ENCODE measurements at regions of chr1 and their contacts with region 1.

Region 1: DNA sequence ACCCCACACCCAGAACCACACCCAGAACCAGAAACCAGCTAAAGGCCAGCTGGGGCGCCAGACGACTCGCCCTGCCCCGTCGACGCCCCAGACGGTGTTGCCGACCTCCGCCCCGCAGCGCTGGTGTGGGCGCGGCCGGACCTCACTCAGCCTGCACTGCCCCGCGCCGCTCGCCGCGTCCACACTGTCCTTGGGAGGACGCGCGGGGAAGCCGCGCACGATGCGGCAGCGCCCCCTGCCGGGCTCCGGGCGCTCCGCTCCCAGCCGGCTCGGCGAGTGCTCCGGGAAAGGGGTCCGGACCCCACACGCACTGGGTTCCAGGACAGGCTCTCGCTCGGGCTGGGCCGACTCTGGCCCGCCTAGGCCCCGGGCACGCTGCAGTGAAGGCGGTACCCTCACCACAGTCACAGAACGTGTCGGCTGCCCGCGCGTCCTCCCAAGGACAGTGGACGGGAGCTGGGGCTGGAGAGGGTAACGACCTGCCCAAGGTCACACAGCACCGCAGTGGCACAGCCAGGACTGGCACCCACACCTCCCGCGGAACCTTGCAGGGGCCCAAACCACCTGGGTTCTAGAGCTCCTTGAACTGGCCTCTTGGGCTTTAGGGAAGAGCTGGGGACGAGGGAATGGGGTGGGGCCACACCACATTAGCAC is 90.2 kb downstream of the DMRTA2 start:
- DNase-seq: peak; percentile 75
- ATAC-seq: peak; percentile 85
- H3K4me3 Mint-ChIP-seq: peak overlapping the region; percentile 34
- H3K27ac Mint-ChIP-seq: no peak overlapping the region
- H3K4me1 Mint-ChIP-seq: peaks cover 3% of the 10 kb centered on the region
- H3K27me3 Mint-ChIP-seq: peaks cover 36% of the 10 kb centered on the region

Region 2: DNA sequence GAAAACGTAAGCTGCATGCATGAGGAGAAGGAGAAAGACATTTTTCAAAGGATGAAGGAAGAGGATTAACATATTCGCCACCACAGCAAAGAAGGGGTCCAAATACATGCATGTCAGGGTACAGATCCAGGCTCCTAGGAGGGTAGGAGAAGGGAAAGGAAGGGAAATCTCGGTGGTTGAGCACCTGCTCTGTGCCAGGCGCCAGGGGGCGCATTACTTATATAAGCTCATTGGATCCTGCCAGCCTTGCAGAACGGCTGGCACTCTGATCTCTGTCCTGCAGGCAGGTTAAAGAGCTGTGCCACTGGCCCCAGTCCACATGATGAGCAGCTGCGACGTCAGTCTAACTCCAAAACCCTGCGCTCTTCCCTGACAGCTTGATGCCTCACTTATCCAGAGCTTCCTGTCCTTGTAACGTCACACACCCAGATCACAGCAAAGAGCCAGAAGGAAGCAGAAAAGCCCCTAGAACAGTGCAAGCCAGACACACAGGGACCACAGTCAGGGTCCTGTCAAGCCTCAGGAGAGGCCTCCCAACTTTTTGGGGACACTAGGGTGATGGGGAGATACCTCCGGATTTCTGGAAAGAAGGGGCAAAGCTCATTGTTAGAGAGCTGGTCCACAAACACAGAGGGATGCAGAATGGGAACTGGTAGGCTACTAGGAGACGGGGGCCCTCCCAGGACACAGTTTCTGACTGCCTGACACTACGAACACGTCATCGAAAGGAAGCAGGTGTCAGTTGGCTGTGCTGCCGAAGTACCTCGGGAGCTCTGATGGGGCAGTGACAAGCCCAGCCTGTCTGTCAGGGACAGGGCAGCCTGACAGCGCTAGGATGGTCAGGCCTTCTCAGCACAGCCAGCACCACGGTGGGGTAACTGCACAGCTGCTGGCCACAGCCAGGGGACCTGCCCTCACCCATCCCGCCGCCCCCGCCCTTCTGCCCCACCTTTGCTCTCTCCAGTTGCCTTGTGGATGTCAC is 1655.5 kb before region 1 on chr1:
- CTCF ChIA-PET with region 1: interaction called, 5 read pairs
- POLR2A ChIA-PET with region 1: no interaction called
- intact Hi-C with region 1: loop called in 1 of 2 experiments (anchors 5 kb)
- DNase-seq: peak; percentile 71
- ATAC-seq: peak; percentile 77
- H3K4me3 Mint-ChIP-seq: no peak overlapping the region
- H3K27ac Mint-ChIP-seq: no peak overlapping the region
- H3K4me1 Mint-ChIP-seq: no peaks in the 10 kb centered on the region
- H3K27me3 Mint-ChIP-seq: peaks cover 20% of the 10 kb centered on the region

Region 3: DNA sequence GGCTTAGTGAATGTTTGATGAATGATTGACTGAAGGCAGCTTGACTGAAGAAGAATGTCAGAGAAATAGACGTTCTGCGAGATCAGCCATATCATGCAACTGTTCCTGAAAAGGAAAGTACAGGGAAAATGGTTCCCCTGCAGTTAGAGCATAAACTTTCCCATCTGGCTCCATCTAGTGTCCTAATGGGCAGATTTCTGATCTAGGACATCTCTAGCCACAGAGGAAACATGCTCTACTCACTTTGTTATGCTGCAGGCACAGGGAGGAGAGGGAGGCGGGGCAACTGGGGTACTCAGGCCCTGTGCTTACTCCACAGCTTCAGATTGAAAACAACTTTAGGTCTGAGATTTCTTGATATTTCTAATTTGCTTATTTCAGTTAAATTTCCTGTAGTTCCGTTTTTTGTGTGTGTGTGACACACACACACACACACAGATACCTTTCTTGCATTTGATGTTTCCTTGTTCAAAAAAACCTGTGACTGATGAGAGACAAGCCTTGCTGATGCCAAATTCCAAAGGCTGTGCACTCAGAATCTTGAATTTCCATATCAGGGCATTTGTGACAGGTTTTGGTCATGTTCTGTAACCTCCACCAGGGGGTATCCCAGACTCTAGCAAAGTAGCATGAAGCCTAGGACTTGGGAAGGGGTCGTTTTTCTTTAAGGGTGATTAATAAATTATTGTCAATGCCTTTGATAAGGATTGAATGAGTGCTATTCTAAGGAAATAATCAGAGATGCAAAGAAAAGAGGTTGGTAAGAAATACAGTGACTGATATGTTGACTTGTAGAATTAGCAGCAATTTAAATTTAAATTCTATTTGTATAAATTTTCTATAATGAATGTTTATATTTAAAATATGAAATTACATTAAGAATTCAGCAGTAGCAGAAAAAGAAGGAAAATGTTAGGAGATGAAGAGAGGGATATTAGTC is 1416.7 kb before region 1 on chr1:
- CTCF ChIA-PET with region 1: no interaction called
- POLR2A ChIA-PET with region 1: no interaction called
- intact Hi-C with region 1: loop called in 1 of 2 experiments (anchors 1 kb)
- DNase-seq: no peak
- ATAC-seq: no peak
- H3K4me3 Mint-ChIP-seq: no peak overlapping the region
- H3K27ac Mint-ChIP-seq: no peak overlapping the region
- H3K4me1 Mint-ChIP-seq: no peaks in the 10 kb centered on the region
- H3K27me3 Mint-ChIP-seq: peaks cover 2% of the 10 kb centered on the region

Region 4: DNA sequence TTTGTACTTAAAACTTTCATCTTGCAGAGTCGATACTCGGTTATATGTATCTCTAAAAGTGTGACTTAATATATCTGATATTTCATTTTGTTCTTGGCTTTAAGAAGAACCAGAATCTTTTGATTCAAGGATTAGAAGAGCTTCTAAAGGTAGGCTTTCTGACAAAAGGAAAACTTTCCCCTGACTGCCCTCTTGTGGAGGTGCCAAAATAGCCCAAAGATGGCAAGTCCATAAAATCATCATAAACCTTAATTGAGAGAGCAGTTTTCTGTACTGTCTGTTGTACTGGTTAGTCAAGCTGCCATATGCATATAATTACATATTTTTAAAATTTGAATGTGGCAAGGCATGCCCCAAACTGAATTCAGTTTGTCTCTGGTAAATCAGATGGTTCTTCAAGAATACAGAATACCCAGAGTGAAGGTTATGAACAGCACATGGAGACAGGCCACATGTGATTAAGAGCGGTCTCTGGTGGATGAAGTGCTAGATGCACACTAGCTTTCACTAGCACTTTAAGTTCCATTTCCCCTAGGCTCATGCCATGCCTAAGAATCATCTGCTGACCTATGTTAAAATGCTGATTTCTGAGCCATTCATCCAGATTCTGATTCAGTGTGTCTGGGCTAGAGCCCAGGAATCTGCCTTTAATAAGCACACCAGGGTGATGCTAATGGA is 252.0 kb before region 1 on chr1:
- CTCF ChIA-PET with region 1: no interaction called
- POLR2A ChIA-PET with region 1: no interaction called
- intact Hi-C with region 1: no loop called
- DNase-seq: peak; percentile 14
- ATAC-seq: no peak
- H3K4me3 Mint-ChIP-seq: no peak overlapping the region
- H3K27ac Mint-ChIP-seq: no peak overlapping the region
- H3K4me1 Mint-ChIP-seq: no peaks in the 10 kb centered on the region
- H3K27me3 Mint-ChIP-seq: peaks cover 2% of the 10 kb centered on the region

Region 5: GRCh38 chr1:50109647-50110075 is 223.4 kb before region 1 on chr1:
- CTCF ChIA-PET with region 1: interaction called, 3 read pairs
- POLR2A ChIA-PET with region 1: no interaction called
- intact Hi-C with region 1: loop called in 1 of 2 experiments (anchors 10 kb)
- DNase-seq: peak; percentile 13
- ATAC-seq: peak; percentile 69
- H3K4me3 Mint-ChIP-seq: peak overlapping the region; percentile 26
- H3K27ac Mint-ChIP-seq: no peak overlapping the region
- H3K4me1 Mint-ChIP-seq: peaks cover 17% of the 10 kb centered on the region
- H3K27me3 Mint-ChIP-seq: peaks cover 53% of the 10 kb centered on the region

Region 6: GRCh38 chr1:50343323-50343722 is 10.3 kb after region 1 on chr1:
- CTCF ChIA-PET with region 1: interaction called, 18 read pairs
- POLR2A ChIA-PET with region 1: no interaction called
- intact Hi-C with region 1: no loop called
- DNase-seq: no peak
- ATAC-seq: no peak
- H3K4me3 Mint-ChIP-seq: no peak overlapping the region
- H3K27ac Mint-ChIP-seq: no peak overlapping the region
- H3K4me1 Mint-ChIP-seq: no peaks in the 10 kb centered on the region
- H3K27me3 Mint-ChIP-seq: peaks cover 9% of the 10 kb centered on the region

Region 7: DNA sequence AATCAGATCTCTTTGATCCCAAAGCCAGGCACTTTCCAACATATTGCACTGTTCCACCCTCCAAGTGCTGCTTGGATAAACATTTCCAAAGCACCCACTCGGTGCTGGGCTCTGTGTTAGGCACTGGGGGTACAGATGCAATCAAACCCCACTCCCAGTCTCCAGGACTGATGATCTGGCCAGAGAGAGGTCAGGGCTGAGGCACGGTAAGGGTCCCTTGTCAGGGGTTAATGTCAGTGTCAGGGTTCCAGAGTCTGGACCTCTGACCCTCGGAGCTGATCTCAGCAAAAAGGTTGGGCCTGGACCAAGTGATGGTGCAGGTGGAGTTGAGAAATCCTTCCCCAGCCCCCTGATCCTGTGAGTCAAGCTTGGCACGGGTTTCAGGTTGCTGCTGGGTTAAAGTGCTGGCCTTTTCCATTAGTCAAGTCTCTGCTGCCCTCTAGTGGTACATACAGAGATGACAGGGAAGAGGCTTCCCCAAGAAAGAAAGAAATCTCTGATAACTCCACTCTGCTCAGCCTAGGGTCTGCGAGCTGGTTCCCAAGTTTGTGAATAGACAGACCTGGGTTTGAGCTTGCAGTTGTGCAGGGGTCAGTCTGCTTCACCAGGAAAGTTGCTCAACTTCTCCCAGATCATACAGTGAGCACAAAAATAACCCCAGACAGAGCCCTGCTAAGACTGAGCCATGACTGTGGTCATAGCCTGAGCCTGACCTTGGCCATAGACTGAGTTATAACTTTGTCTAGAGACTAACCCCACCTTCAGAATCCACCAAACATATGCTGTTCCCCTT is 15.6 kb after region 1 on chr1:
- CTCF ChIA-PET with region 1: interaction called, 18 read pairs
- POLR2A ChIA-PET with region 1: no interaction called
- intact Hi-C with region 1: no loop called
- DNase-seq: peak; percentile 64
- ATAC-seq: peak; percentile 81
- H3K4me3 Mint-ChIP-seq: no peak overlapping the region
- H3K27ac Mint-ChIP-seq: no peak overlapping the region
- H3K4me1 Mint-ChIP-seq: no peaks in the 10 kb centered on the region
- H3K27me3 Mint-ChIP-seq: peaks cover 14% of the 10 kb centered on the region

Region 8: DNA sequence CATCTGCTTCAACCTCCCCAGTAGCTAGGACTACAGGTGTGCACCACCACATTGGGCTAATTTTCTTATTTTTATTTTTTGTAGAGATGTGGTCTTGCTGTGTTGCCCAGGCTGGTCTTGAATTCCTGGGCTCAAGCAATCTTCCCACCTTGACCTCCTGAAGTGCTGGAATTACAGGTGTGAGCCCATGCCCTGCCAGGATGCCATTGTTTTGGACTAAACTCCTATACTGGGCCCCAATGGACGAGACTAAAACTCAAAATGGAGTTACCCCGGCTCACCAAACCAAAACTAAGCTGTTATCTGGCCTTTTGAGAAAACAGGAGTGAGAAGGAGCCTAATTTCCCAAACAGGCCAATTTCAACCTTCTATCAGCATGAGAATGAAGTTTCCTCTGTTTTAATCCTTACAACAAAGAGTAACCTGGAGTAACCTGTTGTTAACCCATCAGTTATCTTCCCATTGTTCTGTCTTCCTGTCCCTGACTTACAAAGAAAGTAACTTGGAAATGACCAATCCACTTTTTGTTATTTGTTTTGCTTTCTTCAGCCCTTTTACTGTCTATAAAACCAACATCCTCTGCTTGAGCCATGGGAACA is 60.6 kb after region 1 on chr1:
- CTCF ChIA-PET with region 1: no interaction called
- POLR2A ChIA-PET with region 1: no interaction called
- intact Hi-C with region 1: no loop called
- DNase-seq: no peak
- ATAC-seq: no peak
- H3K4me3 Mint-ChIP-seq: no peak overlapping the region
- H3K27ac Mint-ChIP-seq: no peak overlapping the region
- H3K4me1 Mint-ChIP-seq: no peaks in the 10 kb centered on the region
- H3K27me3 Mint-ChIP-seq: peaks cover 16% of the 10 kb centered on the region

Measured in activated CD4-positive, alpha-beta T cell treated with anti-CD3 and anti-CD28 coated beads for 36 hours (primary cell).